Dorsolateral prefrontal cortex (tissue), 120 donors: ENCODE measurements at regions of chr3 and their contacts with region 1.

Region 1: GRCh38 chr3:15064835-15065549 is at the start of gene MRPS25:
- DNase-seq: peak; percentile 77 to 92 (median 86)
- H3K4me3 ChIP-seq: peak within 1 kb of the TSS; percentile 69 to 100 (median 93)
- H3K27ac ChIP-seq: peak within 1 kb of the TSS in 56 of 59 donors; percentile 12 to 95 (median 80)
- H3K27me3 ChIP-seq: no peaks in the 10 kb centered on the region
- CTCF ChIP-seq: peak in 37 of 56 donors; percentile 10 to 51 (median 29)
- total RNA-seq, gene MRPS25: 54.3 to 115 (median 83.0) TPM

Region 2: DNA sequence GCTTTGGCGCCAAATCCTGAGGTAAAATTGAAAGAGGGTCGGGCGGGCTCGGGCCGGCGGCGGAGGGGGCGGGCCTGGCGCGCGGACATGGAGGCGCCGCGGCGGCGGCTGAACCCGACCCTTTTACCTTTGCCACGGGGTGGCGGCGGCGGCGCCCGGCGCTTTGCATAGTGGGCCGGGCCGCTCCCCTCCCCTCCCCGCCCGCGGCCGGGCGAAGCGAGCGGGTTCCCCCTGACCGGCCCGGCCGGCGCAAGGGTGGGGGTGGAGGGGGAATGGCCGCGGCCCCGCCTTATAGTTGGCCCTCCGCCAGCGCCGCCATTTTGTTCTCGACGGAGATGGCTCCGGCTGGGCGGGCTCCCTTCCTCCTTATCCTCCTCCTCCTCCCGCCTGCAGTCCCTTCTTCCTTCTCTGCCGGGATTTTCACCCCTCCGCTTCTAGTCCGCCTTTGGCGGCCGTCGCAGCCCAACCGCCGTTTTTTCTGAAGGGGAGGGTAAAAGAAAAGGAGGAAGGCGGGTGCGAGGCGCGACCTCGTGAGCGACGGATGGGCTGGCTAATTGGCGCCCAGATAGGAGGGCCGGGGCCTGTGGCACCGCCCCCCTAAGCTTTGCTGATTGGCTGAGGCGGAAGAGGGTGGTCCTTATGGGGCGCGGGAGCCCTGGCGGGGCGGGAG is 117.0 kb before region 1 on chr3:
- intact Hi-C with region 1: loop called (anchors 1 to 5 kb)
- DNase-seq: peak; percentile 97 to 99 (median 98)
- H3K4me3 ChIP-seq: peak overlapping the region; percentile 65 to 98 (median 91)
- H3K27ac ChIP-seq: peak overlapping the region; percentile 95 to 100 (median 100)
- H3K27me3 ChIP-seq: no peaks in the 10 kb centered on the region
- CTCF ChIP-seq: peak in 2 of 56 donors; percentile 4 to 13

Region 3: GRCh38 chr3:15098503-15099363 is 33.7 kb after region 1 on chr3 and contains the start of gene RBSN:
- intact Hi-C with region 1: loop called in 1 of 2 experiments (anchors 1 kb)
- DNase-seq: peak; percentile 92 to 97 (median 96)
- H3K4me3 ChIP-seq: peak within 1 kb of the TSS; percentile 70 to 99 (median 90)
- H3K27ac ChIP-seq: peak within 1 kb of the TSS in 57 of 59 donors; percentile 27 to 95 (median 87)
- H3K27me3 ChIP-seq: no peaks in the 10 kb centered on the region
- CTCF ChIP-seq: peak in 27 of 56 donors; percentile 11 to 52 (median 32)
- total RNA-seq, gene RBSN: 39.4 to 74.3 (median 61.4) TPM